ENCODE measurements at regions of chr7 and their contacts with region 1.

Region 1: GRCh38 chr7:47179812-47180515 is 401.9 kb downstream of the TNS3 start:
- DNase-seq: peak; percentile 33
- ATAC-seq: peak; percentile 88
- H3K4me3 ChIP-seq: no peak overlapping the region
- H3K27ac ChIP-seq: no peak overlapping the region
- H3K4me1 ChIP-seq: no peaks in the 10 kb centered on the region
- H3K27me3 ChIP-seq: peaks cover 5% of the 10 kb centered on the region; the same call in 1 of the 2 replicates
- CTCF ChIP-seq: peak; percentile 74 to 85 (median 77); a peak in 5 of 6 replicates
- POLR2A ChIP-seq: no peak
- RAD21 ChIP-seq: peak; percentile 88

Region 2: GRCh38 chr7:45872116-45873034 is 1307.6 kb before region 1 on chr7:
- CTCF ChIA-PET with region 1: interaction called, 3 read pairs
- POLR2A ChIA-PET with region 1: no interaction called
- RAD21 ChIA-PET with region 1: no interaction called
- intact Hi-C with region 1: loop called (anchors 5 kb)
- DNase-seq: no peak
- ATAC-seq: peak; percentile 94
- H3K4me3 ChIP-seq: no peak overlapping the region
- H3K27ac ChIP-seq: no peak overlapping the region; the same call in 1 of the 2 replicates
- H3K4me1 ChIP-seq: peaks cover 0 to 17% of the 10 kb centered on the region in 2 experiments; a peak in 2 of 4 replicates
- H3K27me3 ChIP-seq: no peaks in the 10 kb centered on the region
- CTCF ChIP-seq: peak; percentile 23 to 85 (median 62); a peak in 4 of 6 replicates
- POLR2A ChIP-seq: no peak
- RAD21 ChIP-seq: peak; percentile 40

Region 3: DNA sequence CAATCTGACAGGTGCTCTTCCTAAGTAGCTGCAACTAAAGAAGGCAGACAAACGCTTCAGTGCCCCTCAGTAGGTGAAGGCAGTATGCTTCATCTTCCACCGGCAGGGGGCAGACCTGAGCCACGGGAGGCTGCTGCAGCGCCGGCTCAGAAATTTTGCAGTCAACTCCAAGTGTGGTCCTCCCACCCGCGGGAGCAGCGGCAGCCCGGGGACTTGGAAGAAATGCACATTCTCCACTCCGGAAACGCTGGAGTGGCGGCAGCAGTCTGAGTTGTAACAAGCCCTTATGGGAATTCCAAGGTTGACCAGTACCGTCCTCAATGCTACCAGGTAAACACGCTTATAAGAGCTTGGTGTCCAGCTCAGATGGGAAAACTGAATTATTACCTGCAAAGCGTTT is 1262.3 kb before region 1 on chr7:
- CTCF ChIA-PET with region 1: interaction called, 15 read pairs
- POLR2A ChIA-PET with region 1: no interaction called
- RAD21 ChIA-PET with region 1: no interaction called
- intact Hi-C with region 1: loop called (anchors 1 kb)
- DNase-seq: no peak
- ATAC-seq: peak; percentile 69
- H3K4me3 ChIP-seq: no peak overlapping the region
- H3K27ac ChIP-seq: no peak overlapping the region
- H3K4me1 ChIP-seq: peaks cover 3 to 24% of the 10 kb centered on the region in 2 experiments; a peak in 2 of 4 replicates
- H3K27me3 ChIP-seq: peaks cover 8% of the 10 kb centered on the region; the same call in 1 of the 2 replicates
- CTCF ChIP-seq: peak; percentile 70 to 95 (median 91)
- POLR2A ChIP-seq: no peak
- RAD21 ChIP-seq: peak; percentile 84

Region 4: DNA sequence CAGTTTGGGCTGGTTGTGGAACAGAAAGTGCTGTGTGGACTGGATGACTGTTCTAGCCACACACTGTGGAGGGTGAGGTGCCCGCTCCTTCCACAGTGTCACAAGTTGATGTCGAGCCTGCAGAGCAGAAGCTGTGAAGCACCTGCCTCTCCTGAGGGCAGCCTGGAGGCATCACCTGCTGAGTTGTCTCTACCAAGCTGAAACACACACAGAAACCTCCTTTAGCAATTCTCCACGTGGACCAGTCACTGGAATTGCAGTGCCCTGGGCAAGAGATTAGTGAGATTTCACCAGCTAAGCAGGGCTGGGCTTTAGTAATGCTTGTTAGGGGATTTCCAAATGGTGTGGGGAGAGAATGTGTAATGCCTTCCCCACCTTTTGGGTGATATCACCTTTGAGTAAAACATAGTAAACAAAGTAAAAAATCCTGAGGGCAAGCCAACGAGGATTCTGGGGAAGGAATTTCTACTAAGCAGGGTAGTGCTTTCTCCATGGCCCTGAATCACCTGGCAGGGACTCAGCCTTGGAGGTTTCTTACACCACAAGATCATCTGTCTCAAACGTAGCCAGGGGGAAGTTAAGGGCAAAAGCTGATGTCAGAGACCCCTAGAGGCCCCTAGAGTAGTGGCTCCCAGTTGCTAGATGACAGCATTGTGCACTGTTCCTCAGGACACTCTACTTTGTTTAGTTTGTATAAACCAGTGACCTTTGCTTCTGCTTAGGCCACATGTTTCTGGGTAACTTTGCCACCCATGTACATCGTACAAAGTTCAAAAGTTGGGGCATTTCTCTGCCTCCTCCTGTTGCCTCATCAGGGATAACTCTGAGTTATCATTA is 1025.8 kb before region 1 on chr7:
- CTCF ChIA-PET with region 1: no interaction called
- POLR2A ChIA-PET with region 1: no interaction called
- RAD21 ChIA-PET with region 1: no interaction called
- intact Hi-C with region 1: loop called (anchors 10 kb)
- DNase-seq: no peak
- ATAC-seq: no peak
- H3K4me3 ChIP-seq: no peak overlapping the region
- H3K27ac ChIP-seq: no peak overlapping the region
- H3K4me1 ChIP-seq: no peaks in the 10 kb centered on the region
- H3K27me3 ChIP-seq: no peaks in the 10 kb centered on the region
- CTCF ChIP-seq: no peak
- POLR2A ChIP-seq: no peak
- RAD21 ChIP-seq: no peak

Region 5: DNA sequence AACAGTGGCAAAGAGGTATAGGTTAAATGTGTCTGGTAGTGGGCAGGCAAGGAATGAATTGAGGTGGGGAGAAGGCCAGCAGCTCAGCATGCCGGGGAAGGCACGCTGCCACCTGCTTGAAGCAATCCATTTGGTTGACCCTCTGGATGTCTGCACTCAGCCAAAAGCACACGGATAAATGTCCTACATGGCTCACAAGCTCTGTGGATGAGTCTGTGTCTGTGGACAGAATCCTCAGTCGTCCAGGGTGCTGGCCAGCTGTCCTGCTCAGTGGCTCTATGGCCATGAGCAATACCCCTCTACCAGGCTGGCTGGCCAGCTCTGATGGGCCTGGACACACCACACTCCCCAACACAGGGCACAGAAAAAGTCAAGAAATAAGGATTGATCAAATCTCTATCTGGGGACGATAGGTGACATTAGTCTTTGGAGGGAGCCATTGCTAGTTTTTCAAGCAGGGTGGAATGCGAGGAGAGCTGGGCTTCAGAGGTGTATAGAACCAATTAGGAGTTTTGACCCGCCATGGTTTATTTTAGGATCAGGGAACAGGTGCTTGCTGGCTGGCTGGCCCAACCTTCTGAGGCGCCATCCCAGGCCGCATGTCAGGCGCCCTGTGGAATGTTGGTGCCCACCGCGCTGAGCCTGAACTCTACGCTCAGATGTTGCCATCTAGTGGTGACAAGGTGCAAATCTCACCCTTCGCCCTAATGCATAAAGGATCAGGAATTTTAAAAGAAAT is 91.5 kb before region 1 on chr7:
- CTCF ChIA-PET with region 1: no interaction called
- POLR2A ChIA-PET with region 1: no interaction called
- RAD21 ChIA-PET with region 1: no interaction called
- intact Hi-C with region 1: loop called (anchors 1 kb)
- DNase-seq: peak; percentile 34
- ATAC-seq: peak; percentile 99
- H3K4me3 ChIP-seq: no peak overlapping the region
- H3K27ac ChIP-seq: no peak overlapping the region
- H3K4me1 ChIP-seq: no peaks in the 10 kb centered on the region
- H3K27me3 ChIP-seq: no peaks in the 10 kb centered on the region
- CTCF ChIP-seq: peak; percentile 72 to 89 (median 75)
- POLR2A ChIP-seq: no peak
- RAD21 ChIP-seq: peak; percentile 95

Region 6: GRCh38 chr7:47211519-47211973 is 31.6 kb after region 1 on chr7:
- CTCF ChIA-PET with region 1: no interaction called
- POLR2A ChIA-PET with region 1: no interaction called
- RAD21 ChIA-PET with region 1: no interaction called
- intact Hi-C with region 1: no loop called
- DNase-seq: no peak
- ATAC-seq: no peak
- H3K4me3 ChIP-seq: no peak overlapping the region
- H3K27ac ChIP-seq: no peak overlapping the region
- H3K4me1 ChIP-seq: no peaks in the 10 kb centered on the region
- H3K27me3 ChIP-seq: no peaks in the 10 kb centered on the region
- CTCF ChIP-seq: no peak
- POLR2A ChIP-seq: no peak
- RAD21 ChIP-seq: no peak

Measured in HCT116 (cell line).